Dendritic cell treated with granulocyte-macrophage colony-stimulating factor and Interleukin-4, amounts not matched to agents 40 ng/mL and 50 ng/mL, for 4 days (primary cell): ENCODE measurements at regions of chr17 and their contacts with region 1.

Region 1: DNA sequence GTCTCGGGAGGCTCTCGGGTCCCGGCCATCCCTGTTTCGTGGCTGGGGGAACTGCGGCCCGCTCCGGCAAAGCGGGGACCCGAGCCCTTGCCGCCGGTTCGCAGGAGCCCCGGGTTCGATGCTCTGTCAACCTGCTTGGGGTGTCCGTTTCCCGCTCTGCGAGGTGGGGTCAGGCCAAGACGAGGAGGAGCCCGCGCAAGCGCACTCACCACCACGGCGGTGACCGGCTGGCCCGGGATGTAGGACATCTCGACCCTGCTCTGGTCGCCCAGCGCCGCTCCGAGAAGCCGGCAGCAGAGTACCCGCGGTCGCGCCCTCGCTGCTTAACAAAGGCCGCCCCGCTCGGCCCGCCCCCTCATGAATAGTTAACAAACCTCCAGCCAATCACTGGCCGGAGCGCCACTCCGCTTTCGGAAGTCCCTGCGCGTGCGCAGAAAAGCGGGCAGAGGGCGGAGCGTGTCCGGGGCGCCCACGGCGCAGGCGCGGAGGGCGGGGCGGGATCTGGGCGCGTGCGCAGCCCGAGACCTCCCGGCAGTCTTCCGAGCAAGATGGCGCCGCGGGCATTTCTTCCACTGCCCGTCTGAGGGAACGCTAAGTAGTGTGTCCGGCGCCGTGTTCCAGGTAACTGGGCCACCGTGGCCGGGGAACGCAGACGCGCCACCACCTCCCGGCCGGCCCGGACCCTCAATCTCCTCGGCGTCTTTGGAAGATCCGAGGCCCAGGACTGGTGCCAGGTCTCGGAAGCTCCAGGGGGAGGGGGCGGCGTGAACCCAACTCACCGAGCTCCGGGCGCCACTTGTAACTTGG is at the starts of genes EMC6 and TAX1BP3:
- H3K4me3 Mint-ChIP-seq: peak within 1 kb of the TSS; percentile 93
- H3K27ac Mint-ChIP-seq: peak within 1 kb of the TSS; percentile 93
- H3K4me1 Mint-ChIP-seq: peaks cover 69% of the 10 kb centered on the region
- H3K27me3 Mint-ChIP-seq: no peaks in the 10 kb centered on the region

Region 2: GRCh38 chr17:3639981-3640596 is 28.4 kb before region 1 on chr17:
- intact Hi-C with region 1: loop called (anchors 1 kb)
- H3K4me3 Mint-ChIP-seq: peak overlapping the region; percentile 65
- H3K27ac Mint-ChIP-seq: peak overlapping the region; percentile 97
- H3K4me1 Mint-ChIP-seq: peaks cover 81% of the 10 kb centered on the region
- H3K27me3 Mint-ChIP-seq: no peaks in the 10 kb centered on the region

Region 3: DNA sequence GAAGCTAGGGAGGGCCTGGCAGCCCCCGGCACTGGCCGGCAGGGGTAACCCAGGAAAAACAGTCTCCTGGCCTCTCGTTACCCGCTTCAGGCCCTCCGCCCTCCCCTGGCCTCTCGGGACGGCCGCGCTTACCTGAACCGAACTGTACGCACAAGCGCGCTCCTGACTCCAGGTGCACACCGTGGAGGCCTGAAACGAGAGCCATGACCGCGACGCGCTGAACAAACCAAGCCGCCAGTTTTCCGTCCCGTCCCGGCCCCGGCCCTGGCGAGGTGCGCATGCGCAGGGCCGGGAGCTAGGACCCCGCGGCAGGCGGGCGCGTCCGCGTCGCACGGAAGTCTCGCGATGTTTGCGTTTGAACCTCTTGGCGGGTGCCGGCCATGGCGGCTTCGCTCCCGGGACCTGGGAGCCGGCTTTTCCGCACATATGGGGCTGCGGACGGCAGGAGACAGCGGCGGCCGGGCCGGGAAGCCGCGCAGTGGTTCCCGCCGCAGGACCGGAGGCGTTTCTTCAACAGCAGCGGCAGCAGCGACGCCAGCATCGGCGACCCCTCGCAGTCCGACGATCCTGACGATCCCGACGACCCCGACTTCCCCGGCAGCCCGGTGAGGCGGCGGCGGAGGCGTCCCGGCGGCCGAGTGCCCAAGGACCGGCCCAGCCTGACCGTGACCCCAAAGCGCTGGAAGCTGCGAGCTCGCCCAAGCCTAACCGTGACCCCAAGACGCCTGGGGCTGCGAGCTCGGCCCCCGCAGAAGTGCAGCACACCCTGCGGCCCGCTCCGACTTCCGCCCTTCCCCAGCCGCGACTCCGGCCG is 55.3 kb after region 1 on chr17 and contains the start of gene HASPIN:
- intact Hi-C with region 1: loop called (anchors 1 kb)
- H3K4me3 Mint-ChIP-seq: peak within 1 kb of the TSS; percentile 93
- H3K27ac Mint-ChIP-seq: peak within 1 kb of the TSS; percentile 89
- H3K4me1 Mint-ChIP-seq: peaks cover 38% of the 10 kb centered on the region
- H3K27me3 Mint-ChIP-seq: no peaks in the 10 kb centered on the region

Region 4: GRCh38 chr17:3754458-3755334 is 86.2 kb after region 1 on chr17:
- intact Hi-C with region 1: no loop called
- H3K4me3 Mint-ChIP-seq: no peak overlapping the region
- H3K27ac Mint-ChIP-seq: no peak overlapping the region
- H3K4me1 Mint-ChIP-seq: no peaks in the 10 kb centered on the region
- H3K27me3 Mint-ChIP-seq: peaks cover 3% of the 10 kb centered on the region